ENCODE measurements at regions of chr11 and their contacts with region 1.

Region 1: GRCh38 chr11:65274735-65275682 is 13.2 kb downstream of the POLA2 start:
- DNase-seq: peak; percentile 49
- ATAC-seq: peak; percentile 63
- H3K4me3 Mint-ChIP-seq: no peak overlapping the region
- H3K27ac Mint-ChIP-seq: no peak overlapping the region
- H3K4me1 Mint-ChIP-seq: peaks cover 20% of the 10 kb centered on the region
- H3K27me3 Mint-ChIP-seq: no peaks in the 10 kb centered on the region

Region 2: DNA sequence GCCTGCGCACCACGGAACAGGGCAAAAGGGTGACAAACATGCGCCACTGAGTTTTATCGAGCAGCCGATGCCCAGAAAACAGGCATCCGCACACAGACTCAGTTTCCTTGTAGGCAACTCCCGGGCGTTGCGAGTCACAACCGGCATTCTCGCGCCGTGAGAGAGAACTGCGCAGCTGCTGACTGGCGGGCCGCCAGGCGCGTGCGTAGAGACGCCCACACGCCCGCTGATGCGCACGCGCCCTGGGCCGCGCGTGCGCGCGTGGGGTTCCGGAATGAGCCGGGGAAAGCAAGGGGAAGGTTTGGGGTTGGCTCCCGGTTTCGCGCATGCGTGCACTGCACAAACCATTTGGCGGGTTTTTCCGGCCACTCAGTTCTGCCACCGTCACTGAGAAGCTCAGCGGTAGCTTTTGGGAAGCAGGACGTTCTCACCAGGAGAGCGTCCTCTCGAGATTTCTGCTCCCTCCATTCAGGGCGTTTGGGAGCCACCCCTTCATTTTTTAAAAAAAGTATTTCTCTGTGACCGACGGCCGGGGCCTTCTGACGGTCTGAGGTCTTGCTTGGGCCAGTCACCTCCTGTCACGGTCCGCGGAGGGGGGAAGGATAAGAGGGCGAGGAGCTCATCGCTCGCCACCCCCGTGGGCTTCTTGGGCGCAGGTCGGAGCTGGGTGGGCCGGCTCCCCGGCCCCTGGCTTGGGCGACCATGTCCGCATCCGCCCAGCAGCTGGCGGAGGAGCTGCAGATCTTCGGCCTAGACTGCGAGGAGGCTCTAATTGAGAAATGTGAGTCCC is 13.2 kb before region 1 on chr11 and contains the start of gene POLA2:
- CTCF ChIA-PET with region 1: interaction called, 12 read pairs
- DNase-seq: peak; percentile 97
- ATAC-seq: peak; percentile 96
- H3K4me3 Mint-ChIP-seq: peak within 1 kb of the TSS; percentile 94
- H3K27ac Mint-ChIP-seq: peak within 1 kb of the TSS; percentile 93
- H3K4me1 Mint-ChIP-seq: peaks cover 49% of the 10 kb centered on the region
- H3K27me3 Mint-ChIP-seq: no peaks in the 10 kb centered on the region
- total RNA-seq, gene POLA2: 79.8 to 89.5 TPM

Region 3: GRCh38 chr11:65321076-65321475 is 46.1 kb after region 1 on chr11:
- CTCF ChIA-PET with region 1: interaction called, 50 read pairs
- DNase-seq: no peak
- ATAC-seq: no peak
- H3K4me3 Mint-ChIP-seq: no peak overlapping the region
- H3K27ac Mint-ChIP-seq: no peak overlapping the region
- H3K4me1 Mint-ChIP-seq: no peaks in the 10 kb centered on the region
- H3K27me3 Mint-ChIP-seq: peaks cover under 1% of the 10 kb centered on the region

Measured in activated CD8-positive, alpha-beta memory T cell treated with anti-CD3 and anti-CD28 coated beads, Interleukin-2, amount 10 ng/mL, durations not matched to agents 7 days and 5 days (primary cell).